ENCODE measurements at regions of chr1 and their contacts with region 1.

Region 1: DNA sequence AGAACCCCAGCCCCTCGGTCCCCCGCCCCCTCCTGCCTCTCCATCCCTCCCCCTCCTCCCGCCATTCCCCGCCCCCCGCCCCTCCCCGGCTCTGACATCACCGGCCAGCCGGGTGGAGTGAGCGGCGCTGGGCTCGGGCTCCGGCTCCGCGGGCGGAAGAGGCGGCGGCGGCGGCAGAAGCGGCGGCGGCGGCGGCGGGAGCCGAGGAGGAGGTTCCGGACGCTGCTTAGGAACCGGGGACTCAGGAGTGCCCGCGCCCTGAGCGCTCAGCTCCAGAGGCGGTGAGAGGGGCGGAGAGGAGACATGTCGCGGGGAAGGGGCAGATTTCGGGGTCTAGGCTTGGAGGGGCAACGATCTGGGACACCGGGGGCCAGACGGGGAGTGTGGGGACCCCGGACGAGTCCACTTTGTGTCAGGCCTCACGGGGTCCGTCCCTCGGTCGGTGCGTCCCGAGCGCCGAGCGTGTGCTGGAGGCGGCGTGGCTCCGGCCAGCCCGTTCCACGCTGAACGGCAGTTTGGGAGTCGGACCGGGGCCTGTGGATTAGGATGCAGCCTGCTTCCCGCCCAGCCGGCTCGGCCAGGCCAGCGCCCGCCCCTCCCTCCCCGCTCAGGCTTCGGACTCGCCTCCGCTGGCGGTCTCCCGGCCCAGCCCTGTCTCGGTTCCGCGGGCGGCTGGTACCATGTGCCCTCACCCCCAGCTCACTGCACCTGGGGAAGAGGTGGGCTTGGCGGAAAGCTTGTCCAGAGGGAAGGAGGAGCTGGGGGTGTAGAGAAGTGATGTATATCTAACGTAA is at the start of gene PEA15:
- DNase-seq: peak in 1 of 2 donors; percentile 54
- ATAC-seq: peak; percentile 61 to 66
- H3K4me3 ChIP-seq: peak within 1 kb of the TSS; percentile 73 to 94 (median 86)
- H3K27ac ChIP-seq: peak within 1 kb of the TSS; percentile 84 to 93 (median 90)
- H3K4me1 ChIP-seq: peaks cover 35 to 61% of the 10 kb centered on the region in 2 donors
- H3K27me3 ChIP-seq: no peaks in the 10 kb centered on the region
- CTCF ChIP-seq: no peak
- POLR2A ChIP-seq: peak; percentile 69 to 76
- total RNA-seq, gene PEA15: 10.5 to 34.7 (median 27.2) TPM

Region 2: GRCh38 chr1:160117709-160118183 is 87.7 kb before region 1 on chr1:
- in situ Hi-C with region 1: no loop called
- intact Hi-C with region 1: no loop called
- DNase-seq: peak; percentile 70 to 87
- ATAC-seq: peak; percentile 38 to 52
- H3K4me3 ChIP-seq: peak overlapping the region; percentile 54 to 86 (median 72)
- H3K27ac ChIP-seq: peak overlapping the region; percentile 97 to 100 (median 98)
- H3K4me1 ChIP-seq: peaks cover 74 to 83% of the 10 kb centered on the region in 2 donors
- H3K27me3 ChIP-seq: no peaks in the 10 kb centered on the region
- CTCF ChIP-seq: no peak
- POLR2A ChIP-seq: peak; percentile 45 to 55

Region 3: DNA sequence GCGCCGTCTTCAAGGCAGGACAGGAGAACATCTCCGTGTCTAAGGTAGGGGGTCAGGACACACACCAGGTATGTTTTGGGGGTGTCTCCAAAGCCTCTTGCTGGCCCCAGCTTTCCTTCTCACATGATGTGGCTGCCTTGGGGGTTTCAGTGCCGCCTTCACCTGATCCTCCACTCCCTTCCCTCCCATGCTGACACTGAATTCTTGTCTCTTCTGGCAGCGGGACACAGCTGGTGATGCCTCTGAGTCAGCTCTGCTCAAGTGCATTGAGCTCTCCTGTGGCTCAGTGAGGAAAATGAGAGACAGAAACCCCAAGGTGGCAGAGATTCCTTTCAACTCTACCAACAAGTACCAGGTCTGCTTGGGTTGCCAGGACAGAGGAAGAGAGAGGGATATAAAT is 76.4 kb before region 1 on chr1:
- in situ Hi-C with region 1: no loop called
- intact Hi-C with region 1: no loop called
- DNase-seq: peak; percentile 82 to 89
- ATAC-seq: peak; percentile 23 to 34
- H3K4me3 ChIP-seq: peak overlapping the region; percentile 9 to 41 (median 38)
- H3K27ac ChIP-seq: peak overlapping the region; percentile 92 to 100 (median 98)
- H3K4me1 ChIP-seq: peaks cover 87 to 91% of the 10 kb centered on the region in 2 donors
- H3K27me3 ChIP-seq: no peaks in the 10 kb centered on the region
- CTCF ChIP-seq: no peak
- POLR2A ChIP-seq: peak; percentile 58 to 66

Region 4: DNA sequence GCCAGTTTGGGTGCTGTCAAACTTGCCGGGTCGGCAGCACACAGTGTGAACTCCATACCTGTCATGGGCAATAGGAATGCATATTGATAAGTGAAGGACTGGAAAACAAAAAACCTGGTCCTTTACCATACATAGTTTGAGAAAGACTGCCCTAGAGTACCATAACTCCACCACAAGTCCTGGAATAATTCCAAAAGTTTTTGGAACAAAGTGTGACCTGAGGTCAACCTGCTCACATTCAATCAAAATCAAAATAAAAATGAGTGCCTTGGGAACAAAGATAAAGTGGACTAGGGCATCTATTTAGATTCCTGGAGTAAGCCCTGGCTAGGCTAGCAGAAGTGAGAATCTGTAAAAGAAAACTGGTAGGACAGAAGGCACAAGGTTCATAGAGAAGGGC is 71.9 kb after region 1 on chr1:
- in situ Hi-C with region 1: no loop called
- intact Hi-C with region 1: loop called (anchors 2 kb)
- DNase-seq: no peak
- ATAC-seq: no peak
- H3K4me3 ChIP-seq: no peak overlapping the region
- H3K27ac ChIP-seq: no peak overlapping the region
- H3K4me1 ChIP-seq: no peaks in the 10 kb centered on the region
- H3K27me3 ChIP-seq: no peaks in the 10 kb centered on the region
- CTCF ChIP-seq: no peak
- POLR2A ChIP-seq: no peak